ENCODE measurements at regions of chr9 and their contacts with region 1.

Region 1: DNA sequence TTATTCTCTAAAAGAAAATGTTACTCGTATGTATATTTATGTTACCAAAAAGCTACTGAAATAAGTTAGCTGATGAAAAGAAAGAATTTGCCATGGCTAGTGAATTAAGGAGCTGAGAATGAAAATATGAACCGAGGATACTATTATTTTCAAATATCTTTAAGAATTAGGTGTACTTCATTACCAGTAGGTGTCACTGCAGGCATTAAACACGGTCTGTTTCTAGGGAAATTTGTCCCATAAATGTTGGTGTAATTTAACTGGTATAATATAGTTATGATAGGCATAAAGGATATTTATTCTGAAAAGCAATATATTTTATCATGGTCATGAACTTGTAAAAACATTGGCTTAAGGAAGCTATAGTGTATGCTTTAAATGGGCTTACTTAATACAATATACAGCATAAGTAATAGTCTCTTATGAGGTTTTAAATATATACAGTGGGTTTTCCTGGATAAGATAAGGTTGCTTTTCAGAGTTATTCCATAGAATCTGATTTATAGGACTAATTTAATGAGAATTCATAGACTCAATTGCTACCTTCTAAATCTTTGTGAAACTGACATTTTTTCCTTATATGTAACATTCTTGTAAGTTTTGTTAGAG is 72.4 kb upstream of the MPDZ start:
- DNase-seq: peak; percentile 22
- H3K4me3 ChIP-seq: no peak overlapping the region
- H3K27ac ChIP-seq: no peak overlapping the region
- H3K4me1 ChIP-seq: no peaks in the 10 kb centered on the region
- H3K27me3 ChIP-seq: no peaks in the 10 kb centered on the region
- CTCF ChIP-seq: peak; percentile 56 to 66

Region 2: DNA sequence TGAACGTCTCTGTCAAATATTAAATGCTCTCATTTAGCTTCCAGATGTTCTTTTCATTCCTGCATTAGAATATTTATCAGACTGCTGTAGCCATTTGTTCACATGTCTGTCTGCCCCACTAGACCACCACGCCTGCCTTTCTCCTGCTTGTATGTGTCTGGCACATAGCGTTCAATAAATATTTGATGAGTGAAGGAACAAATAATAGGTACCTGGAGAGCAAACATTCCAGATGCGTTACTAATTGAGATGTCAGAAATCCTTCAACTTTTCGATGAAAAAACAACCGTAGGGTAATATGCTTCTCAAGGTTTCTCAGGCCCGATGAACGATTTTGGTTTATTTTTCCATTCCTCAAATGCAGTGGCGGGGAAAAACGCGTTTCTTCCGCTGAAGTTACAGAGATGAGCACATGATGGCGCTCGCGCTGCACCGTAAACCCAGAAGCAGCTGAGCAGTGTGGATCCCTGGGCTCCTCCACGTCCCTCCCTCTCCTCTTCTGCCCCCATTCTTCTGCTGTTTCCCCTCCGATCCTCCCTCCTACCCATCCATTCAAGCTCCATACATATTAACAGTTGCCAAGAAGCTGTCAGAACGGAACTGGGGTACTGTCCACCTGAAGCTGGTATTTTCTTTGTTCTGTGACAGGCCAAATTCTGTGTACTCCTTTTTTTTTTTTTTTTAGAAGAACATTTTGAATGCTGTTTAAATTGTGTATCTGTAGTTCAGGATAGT is 317.8 kb before region 1 on chr9:
- CTCF ChIA-PET with region 1: no interaction called
- dilution Hi-C with region 1: no loop called
- in situ Hi-C with region 1: no loop called
- intact Hi-C with region 1: loop called (anchors 10 kb)
- DNase-seq: peak; percentile 47
- H3K4me3 ChIP-seq: peak overlapping the region in 1 of 3 experiments; percentile 24
- H3K27ac ChIP-seq: no peak overlapping the region
- H3K4me1 ChIP-seq: no peaks in the 10 kb centered on the region
- H3K27me3 ChIP-seq: no peaks in the 10 kb centered on the region
- CTCF ChIP-seq: peak; percentile 83

Region 3: DNA sequence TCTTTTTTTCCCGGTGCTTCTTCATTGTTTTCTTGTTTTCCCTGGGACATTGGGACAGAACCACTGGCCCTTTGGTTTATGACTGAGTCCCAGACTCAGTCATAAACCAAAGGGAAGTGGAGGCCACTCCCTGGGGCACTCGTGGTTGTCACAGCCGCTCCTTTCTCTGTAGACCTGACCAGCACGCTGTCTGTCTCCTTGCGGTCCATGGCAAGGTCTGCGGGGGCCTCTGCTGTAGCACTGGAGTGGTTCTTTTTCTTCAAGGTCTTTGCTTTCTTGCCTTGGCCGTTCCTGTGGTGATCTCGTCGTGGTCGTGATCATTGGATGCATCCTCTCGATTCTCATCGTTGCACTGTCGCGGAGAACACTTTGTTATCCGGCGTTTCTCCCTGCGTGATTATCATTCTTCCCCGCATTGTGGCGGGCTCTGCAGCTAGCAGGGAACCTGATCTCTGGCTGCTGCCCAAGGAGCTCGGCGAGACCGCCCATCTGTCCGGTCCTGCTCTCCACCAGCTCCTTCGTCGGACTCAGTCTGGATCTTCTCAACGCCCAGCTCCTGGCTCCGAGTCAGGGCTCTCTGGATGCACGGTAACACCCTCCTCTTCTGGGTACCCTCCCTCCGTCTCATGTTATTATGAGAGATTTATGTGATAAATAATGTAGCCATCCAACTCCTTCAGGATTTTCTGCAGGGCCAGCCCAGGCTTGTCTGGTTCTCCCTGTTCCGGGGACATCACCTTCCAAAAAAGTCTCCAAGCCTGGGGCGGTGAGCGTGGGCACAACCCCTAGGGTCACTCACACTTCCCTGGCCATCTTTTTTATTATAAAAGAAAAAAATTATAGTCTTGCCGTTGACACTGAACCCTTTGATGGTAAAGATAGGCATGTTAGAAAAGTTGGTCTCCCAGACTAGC is 28.8 kb before region 1 on chr9:
- CTCF ChIA-PET with region 1: no interaction called
- dilution Hi-C with region 1: no loop called
- in situ Hi-C with region 1: no loop called
- intact Hi-C with region 1: no loop called
- DNase-seq: peak; percentile 8
- H3K4me3 ChIP-seq: no peak overlapping the region
- H3K27ac ChIP-seq: no peak overlapping the region
- H3K4me1 ChIP-seq: peaks cover 3% of the 10 kb centered on the region
- H3K27me3 ChIP-seq: no peaks in the 10 kb centered on the region
- CTCF ChIP-seq: no peak

Region 4: GRCh38 chr9:14400658-14400995 is 1048.7 kb after region 1 on chr9:
- CTCF ChIA-PET with region 1: no interaction called
- dilution Hi-C with region 1: no loop called
- in situ Hi-C with region 1: no loop called
- intact Hi-C with region 1: loop called (anchors 5 kb)
- DNase-seq: peak; percentile 77
- H3K4me3 ChIP-seq: peak overlapping the region in 1 of 3 experiments; percentile 31
- H3K27ac ChIP-seq: no peak overlapping the region
- H3K4me1 ChIP-seq: peaks cover 6% of the 10 kb centered on the region
- H3K27me3 ChIP-seq: peaks cover 5% of the 10 kb centered on the region
- CTCF ChIP-seq: peak; percentile 60 to 66

Region 5: DNA sequence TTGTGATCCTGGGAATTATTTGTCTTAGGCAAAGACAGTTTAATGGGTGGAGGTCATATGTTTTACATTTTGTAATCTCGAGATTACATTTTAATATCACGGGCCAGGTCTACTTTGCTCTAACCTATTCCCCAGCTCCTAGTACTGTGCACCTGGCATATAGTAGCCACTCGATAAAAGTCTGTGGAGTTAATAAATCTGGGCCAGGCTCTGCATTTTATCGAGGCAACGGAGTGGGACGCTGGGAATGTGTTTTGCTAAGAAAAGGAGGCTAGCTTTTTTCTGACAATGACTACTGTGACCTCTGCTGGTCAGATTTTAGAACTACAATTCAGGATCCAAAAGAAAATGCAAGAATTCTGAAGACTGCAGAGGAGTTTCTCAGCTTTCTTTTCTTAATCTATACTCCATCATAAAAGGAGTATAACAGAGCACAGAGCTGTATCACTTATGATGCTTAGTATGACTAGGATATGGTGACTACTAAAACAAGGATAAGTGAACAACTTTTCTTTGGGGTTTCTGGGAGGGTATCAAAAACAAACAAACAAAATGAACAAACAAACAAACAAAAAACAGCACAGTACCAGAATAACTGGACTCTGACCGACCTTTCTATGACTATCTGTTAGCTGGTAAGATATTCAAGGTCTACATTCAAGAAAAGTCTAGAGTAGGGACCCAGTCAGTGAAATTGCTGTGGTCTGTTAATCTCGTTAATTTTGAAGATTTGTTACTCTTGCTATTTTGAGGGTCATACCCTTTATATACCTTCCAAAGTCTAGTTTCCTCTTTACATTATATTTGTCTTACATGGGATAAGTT is 1416.7 kb after region 1 on chr9:
- CTCF ChIA-PET with region 1: no interaction called
- dilution Hi-C with region 1: no loop called
- in situ Hi-C with region 1: loop called in 1 of 2 experiments (anchors 25 kb)
- intact Hi-C with region 1: loop called (anchors 5 kb)
- DNase-seq: peak; percentile 36
- H3K4me3 ChIP-seq: no peak overlapping the region
- H3K27ac ChIP-seq: no peak overlapping the region
- H3K4me1 ChIP-seq: no peaks in the 10 kb centered on the region
- H3K27me3 ChIP-seq: no peaks in the 10 kb centered on the region
- CTCF ChIP-seq: peak; percentile 56 to 72